Prostate gland (tissue), 2 donors: ENCODE measurements at regions of chr4 and their contacts with region 1.

Region 1: GRCh38 chr4:37389967-37390580 is 145.5 kb downstream of the NWD2 start:
- DNase-seq: peak; percentile 9
- H3K4me3 ChIP-seq: no peak overlapping the region
- H3K27ac ChIP-seq: no peak overlapping the region
- H3K4me1 ChIP-seq: no peaks in the 10 kb centered on the region
- H3K27me3 ChIP-seq: no peaks in the 10 kb centered on the region
- CTCF ChIP-seq: peak; percentile 19 to 55 (median 52)
- POLR2A ChIP-seq: no peak

Region 2: GRCh38 chr4:36348403-36348938 is 1041.6 kb before region 1 on chr4:
- intact Hi-C with region 1: loop called (anchors 10 kb)
- DNase-seq: no peak
- H3K4me3 ChIP-seq: no peak overlapping the region
- H3K27ac ChIP-seq: no peak overlapping the region
- H3K4me1 ChIP-seq: no peaks in the 10 kb centered on the region
- H3K27me3 ChIP-seq: no peaks in the 10 kb centered on the region
- CTCF ChIP-seq: no peak
- POLR2A ChIP-seq: no peak

Region 3: DNA sequence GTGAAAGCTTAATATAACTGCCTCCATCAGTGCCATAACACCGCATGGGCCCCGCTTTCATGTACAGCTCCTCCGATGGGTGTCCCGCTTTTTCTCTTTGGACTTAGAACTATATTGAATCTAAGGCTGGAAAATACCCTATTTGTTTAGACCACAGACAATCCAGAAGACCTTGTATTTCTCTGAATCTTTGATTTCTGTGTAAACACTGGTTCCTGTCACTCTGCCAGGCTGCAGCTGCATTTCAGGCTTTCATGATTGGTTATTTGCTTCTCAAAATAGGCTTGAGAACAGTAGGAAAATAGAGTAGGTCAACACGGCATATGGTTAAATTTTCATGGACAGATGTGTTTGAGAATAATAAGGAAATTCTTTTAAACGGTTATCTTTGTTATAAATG is 65.5 kb before region 1 on chr4:
- intact Hi-C with region 1: no loop called
- DNase-seq: no peak
- H3K4me3 ChIP-seq: no peak overlapping the region
- H3K27ac ChIP-seq: no peak overlapping the region
- H3K4me1 ChIP-seq: no peaks in the 10 kb centered on the region
- H3K27me3 ChIP-seq: no peaks in the 10 kb centered on the region
- CTCF ChIP-seq: no peak
- POLR2A ChIP-seq: no peak

Region 4: DNA sequence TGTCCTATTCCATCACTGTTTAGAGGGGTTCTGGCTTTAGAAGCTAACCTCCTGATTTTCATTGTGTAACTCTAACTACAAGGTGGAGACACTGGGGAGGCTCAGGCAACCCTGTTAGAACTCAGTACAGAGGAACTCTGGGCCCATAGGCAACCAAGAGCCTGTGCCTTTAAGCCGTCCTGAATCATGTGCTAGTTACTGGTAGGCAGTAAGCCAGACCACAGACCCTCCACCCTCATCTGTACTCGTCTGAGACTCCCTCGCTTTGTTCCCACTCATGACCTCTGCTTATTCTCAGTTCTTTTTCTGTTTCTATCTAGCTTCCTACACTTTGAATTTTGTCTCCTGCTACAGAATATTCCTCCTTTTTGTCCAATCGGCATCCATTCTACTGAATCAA is 532.3 kb after region 1 on chr4:
- intact Hi-C with region 1: no loop called
- DNase-seq: no peak
- H3K4me3 ChIP-seq: no peak overlapping the region
- H3K27ac ChIP-seq: no peak overlapping the region
- H3K4me1 ChIP-seq: no peaks in the 10 kb centered on the region
- H3K27me3 ChIP-seq: no peaks in the 10 kb centered on the region
- CTCF ChIP-seq: no peak
- POLR2A ChIP-seq: no peak

Region 5: GRCh38 chr4:38040619-38041018 is 650.5 kb after region 1 on chr4:
- intact Hi-C with region 1: no loop called
- DNase-seq: no peak
- H3K4me3 ChIP-seq: no peak overlapping the region
- H3K27ac ChIP-seq: no peak overlapping the region
- H3K4me1 ChIP-seq: no peaks in the 10 kb centered on the region
- H3K27me3 ChIP-seq: no peaks in the 10 kb centered on the region
- CTCF ChIP-seq: no peak
- POLR2A ChIP-seq: no peak